Right lobe of liver (tissue), 6 donors: ENCODE measurements at regions of chr5 and their contacts with region 1.

Region 1: GRCh38 chr5:138503487-138504270 is 38.4 kb downstream of the EGR1 start:
- DNase-seq: peak in 1 of 3 donors; percentile 56
- ATAC-seq: peak; percentile 63 to 74 (median 68)
- H3K4me3 ChIP-seq: no peak overlapping the region
- H3K27ac ChIP-seq: peak overlapping the region in 1 of 3 donors; percentile 79
- H3K4me1 ChIP-seq: peaks cover 0 to 45% (median 17%) of the 10 kb centered on the region in 4 donors
- H3K27me3 ChIP-seq: no peaks in the 10 kb centered on the region
- CTCF ChIP-seq: peak; percentile 72 to 79 (median 74)
- POLR2A ChIP-seq: no peak

Region 2: DNA sequence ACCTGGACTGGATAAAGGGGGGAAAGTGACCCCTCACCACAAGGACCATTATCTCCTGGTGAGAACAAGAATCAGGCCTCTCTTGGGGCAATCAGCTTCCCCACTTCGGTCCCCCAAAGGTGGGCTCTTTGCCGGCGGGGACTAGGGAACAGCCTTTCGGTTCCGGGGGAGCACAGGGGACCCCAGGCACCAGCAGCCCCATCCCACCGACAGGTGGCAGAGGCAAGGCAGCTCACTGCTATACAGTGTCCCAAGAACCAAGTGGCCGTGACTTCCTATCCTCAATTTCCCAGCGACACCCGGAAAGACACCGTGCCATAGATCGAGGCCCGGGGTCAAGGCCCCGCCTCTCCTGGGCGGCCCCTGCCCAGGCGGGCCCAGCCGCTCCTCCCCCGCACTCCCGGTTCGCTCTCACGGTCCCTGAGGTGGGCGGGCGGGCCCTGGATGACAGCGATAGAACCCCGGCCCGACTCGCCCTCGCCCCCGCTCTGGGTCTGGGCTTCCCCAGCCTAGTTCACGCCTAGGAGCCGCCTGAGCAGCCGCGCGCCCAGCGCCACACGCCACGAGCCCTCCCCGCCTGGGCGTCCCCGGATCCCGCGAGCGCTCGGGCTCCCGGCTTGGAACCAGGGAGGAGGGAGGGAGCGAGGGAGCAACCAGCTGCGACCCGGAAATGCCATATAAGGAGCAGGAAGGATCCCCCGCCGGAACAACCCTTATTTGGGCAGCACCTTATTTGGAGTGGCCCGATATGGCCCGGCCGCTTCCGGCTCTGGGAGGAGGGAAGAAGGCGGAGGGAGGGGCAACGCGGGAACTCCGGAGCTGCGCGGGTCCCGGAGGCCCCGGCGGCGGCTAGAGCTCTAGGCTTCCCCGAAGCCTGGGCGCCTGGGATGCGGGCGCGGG is 39.0 kb before region 1 on chr5:
- intact Hi-C with region 1: loop called in 1 of 2 experiments (anchors 5 kb)
- DNase-seq: peak; percentile 96 to 98 (median 98)
- ATAC-seq: peak; percentile 76 to 86 (median 78)
- H3K4me3 ChIP-seq: peak overlapping the region; percentile 65 to 91 (median 67)
- H3K27ac ChIP-seq: peak overlapping the region; percentile 93 to 97 (median 97)
- H3K4me1 ChIP-seq: peaks cover 0 to 11% (median 5%) of the 10 kb centered on the region in 4 donors
- H3K27me3 ChIP-seq: no peaks in the 10 kb centered on the region
- CTCF ChIP-seq: peak in 3 of 4 donors; percentile 36 to 45 (median 38)
- POLR2A ChIP-seq: peak; percentile 60